GM18951 (cell line): ENCODE measurements at regions of chr2 and their contacts with region 1.

Region 1: GRCh38 chr2:185738679-185739472 is at the start of gene FSIP2:
- POLR2A ChIP-seq: no peak

Region 2: GRCh38 chr2:185188656-185189055 is 550.2 kb before region 1 on chr2:
- in situ Hi-C with region 1: no loop called
- POLR2A ChIP-seq: no peak

Region 3: DNA sequence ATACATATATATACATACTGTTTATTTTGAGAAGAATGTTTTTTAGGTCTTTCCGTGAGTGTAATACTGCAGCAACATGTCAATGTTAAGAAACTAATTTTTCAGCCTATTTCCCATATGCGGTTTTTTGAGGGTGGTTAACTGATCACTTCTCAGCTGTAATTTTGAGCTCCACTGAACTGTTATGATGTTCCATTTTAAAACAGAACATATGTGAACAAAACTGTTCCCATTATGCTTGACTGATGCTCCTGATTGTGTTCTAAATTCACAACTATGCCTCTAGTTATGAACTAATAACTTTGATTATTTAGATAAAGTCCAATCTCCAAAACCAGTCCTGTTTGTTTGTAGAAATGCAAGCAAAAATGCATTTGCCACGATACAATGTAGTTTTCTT is 511.5 kb before region 1 on chr2:
- in situ Hi-C with region 1: no loop called
- POLR2A ChIP-seq: no peak

Region 4: GRCh38 chr2:185785851-185786473 is 47.1 kb after region 1 on chr2:
- in situ Hi-C with region 1: no loop called
- POLR2A ChIP-seq: no peak

Region 5: DNA sequence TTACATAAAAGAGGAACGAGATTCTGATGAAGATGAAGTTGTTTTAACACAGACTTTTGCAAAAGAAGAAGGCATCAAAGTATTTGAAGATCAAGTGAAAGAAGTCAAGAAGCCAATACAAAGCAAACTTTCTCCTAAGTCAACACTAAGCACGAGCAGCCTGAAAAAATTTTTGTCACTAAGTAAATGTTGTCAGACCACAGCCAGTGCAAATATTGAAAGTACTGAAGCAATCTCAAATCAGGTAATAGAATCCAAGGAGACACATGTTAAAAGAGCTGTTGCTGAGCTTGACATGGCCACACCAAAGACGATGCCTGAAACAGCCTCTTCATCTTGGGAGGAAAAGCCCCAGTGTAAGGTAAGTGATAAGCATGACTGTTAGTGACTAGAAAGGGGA is 74.8 kb after region 1 on chr2:
- in situ Hi-C with region 1: no loop called
- POLR2A ChIP-seq: no peak

Region 6: DNA sequence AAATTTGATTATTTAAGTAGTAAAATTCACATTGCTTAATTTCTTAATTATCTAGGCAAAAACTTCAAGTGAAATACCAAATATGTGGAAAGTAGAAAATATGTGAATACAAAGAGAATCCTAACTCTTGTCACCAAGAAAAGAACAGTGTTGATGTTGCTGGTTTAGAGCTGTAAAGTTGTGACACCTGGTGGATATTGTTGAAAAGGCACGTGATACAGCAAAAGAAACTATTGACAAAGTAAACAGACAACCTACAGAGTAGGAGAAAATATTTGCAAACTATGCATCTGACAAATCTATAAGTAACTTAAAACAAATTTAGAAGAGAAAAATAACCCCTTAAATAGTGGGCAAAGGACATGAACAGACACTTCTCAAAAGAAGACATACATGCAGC is 721.6 kb after region 1 on chr2:
- in situ Hi-C with region 1: loop called (anchors 25 kb)
- POLR2A ChIP-seq: no peak